ENCODE measurements at regions of chr2 and their contacts with region 1.

Region 1: GRCh38 chr2:162123806-162124758 is 28.0 kb downstream of the GCG start:
- DNase-seq: no peak
- H3K4me3 ChIP-seq: no peak overlapping the region
- H3K27ac ChIP-seq: no peak overlapping the region
- H3K4me1 ChIP-seq: no peaks in the 10 kb centered on the region
- H3K27me3 ChIP-seq: no peaks in the 10 kb centered on the region
- CTCF ChIP-seq: peak in 2 of 3 experiments; percentile 11 to 52; a peak in 2 of 4 replicates
- EP300 ChIP-seq: no peak
- POLR2A ChIP-seq: no peak
- RAD21 ChIP-seq: peak in 1 of 2 experiments; percentile 72

Region 2: GRCh38 chr2:161946489-161947107 is 177.5 kb before region 1 on chr2:
- CTCF ChIA-PET with region 1: interaction called, 27 read pairs
- POLR2A ChIA-PET with region 1: no interaction called
- DNase-seq: no peak
- H3K4me3 ChIP-seq: no peak overlapping the region
- H3K27ac ChIP-seq: no peak overlapping the region
- H3K4me1 ChIP-seq: peaks cover 0 to 4% (median 0%) of the 10 kb centered on the region in 4 experiments; a peak in 1 of 7 replicates
- H3K27me3 ChIP-seq: no peaks in the 10 kb centered on the region
- CTCF ChIP-seq: peak in 2 of 3 experiments; percentile 23 to 31; a peak in 2 of 4 replicates
- EP300 ChIP-seq: no peak
- POLR2A ChIP-seq: no peak
- RAD21 ChIP-seq: peak; percentile 62 to 67

Region 3: DNA sequence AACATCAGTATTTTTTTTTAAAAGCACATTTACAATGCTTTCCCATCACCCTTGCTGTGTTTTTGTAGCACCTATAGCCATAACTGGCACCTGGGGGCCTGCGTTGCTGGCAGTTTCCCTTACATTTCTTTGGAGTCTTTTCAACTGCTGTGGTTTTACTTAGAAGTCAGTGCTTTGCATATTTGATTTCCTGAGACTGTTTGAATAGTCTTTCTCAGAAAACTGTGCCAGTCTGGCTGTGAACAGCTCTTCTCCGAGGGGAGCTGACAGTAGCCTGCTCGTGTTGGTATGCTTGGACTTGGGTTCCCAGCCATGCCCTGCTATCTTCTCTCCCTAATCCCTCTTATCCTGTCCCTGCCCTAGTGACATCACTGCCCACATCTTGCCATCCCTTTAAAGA is 131.6 kb before region 1 on chr2:
- CTCF ChIA-PET with region 1: interaction called, 14 read pairs
- POLR2A ChIA-PET with region 1: no interaction called
- DNase-seq: no peak
- H3K4me3 ChIP-seq: no peak overlapping the region
- H3K27ac ChIP-seq: no peak overlapping the region
- H3K4me1 ChIP-seq: no peaks in the 10 kb centered on the region
- H3K27me3 ChIP-seq: no peaks in the 10 kb centered on the region
- CTCF ChIP-seq: no peak
- EP300 ChIP-seq: no peak
- POLR2A ChIP-seq: no peak
- RAD21 ChIP-seq: no peak

Region 4: DNA sequence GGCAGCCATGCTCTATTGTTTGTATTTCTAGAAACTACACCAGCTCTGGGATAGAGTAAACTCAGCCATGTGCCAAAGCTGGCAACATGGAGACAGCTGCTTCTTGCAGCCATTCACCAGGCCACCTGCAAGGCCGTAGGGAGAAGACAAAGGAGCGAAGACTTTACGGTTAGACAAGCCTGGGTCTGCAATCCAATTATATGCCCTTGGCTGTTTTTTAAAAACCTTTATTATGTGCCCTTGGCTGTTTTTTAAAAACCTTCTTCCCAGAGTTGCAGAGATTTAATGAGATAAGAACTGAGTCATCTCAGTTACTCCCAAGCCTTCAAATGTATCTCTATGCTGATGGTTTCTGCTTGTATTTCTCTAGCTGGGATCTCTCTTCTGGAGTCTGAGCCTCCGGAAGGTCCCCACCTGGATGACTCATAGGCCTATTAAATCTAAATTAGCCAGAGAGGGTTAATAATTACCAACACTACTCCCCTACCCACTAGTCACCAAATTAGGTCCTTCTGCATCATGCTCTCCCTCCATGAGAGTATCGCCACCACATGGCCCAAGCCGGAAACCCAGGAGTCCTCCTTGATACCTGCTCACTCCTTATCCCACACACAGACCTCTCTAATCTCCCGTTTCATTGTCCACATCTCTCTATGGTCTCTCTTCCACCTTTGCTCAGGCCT is 32.6 kb before region 1 on chr2:
- CTCF ChIA-PET with region 1: interaction called, 11 read pairs
- POLR2A ChIA-PET with region 1: no interaction called
- DNase-seq: peak; percentile 5 to 60
- H3K4me3 ChIP-seq: no peak overlapping the region
- H3K27ac ChIP-seq: no peak overlapping the region
- H3K4me1 ChIP-seq: no peaks in the 10 kb centered on the region
- H3K27me3 ChIP-seq: no peaks in the 10 kb centered on the region
- CTCF ChIP-seq: peak; percentile 54 to 68 (median 62)
- EP300 ChIP-seq: no peak
- POLR2A ChIP-seq: no peak
- RAD21 ChIP-seq: peak; percentile 70 to 76

Region 5: DNA sequence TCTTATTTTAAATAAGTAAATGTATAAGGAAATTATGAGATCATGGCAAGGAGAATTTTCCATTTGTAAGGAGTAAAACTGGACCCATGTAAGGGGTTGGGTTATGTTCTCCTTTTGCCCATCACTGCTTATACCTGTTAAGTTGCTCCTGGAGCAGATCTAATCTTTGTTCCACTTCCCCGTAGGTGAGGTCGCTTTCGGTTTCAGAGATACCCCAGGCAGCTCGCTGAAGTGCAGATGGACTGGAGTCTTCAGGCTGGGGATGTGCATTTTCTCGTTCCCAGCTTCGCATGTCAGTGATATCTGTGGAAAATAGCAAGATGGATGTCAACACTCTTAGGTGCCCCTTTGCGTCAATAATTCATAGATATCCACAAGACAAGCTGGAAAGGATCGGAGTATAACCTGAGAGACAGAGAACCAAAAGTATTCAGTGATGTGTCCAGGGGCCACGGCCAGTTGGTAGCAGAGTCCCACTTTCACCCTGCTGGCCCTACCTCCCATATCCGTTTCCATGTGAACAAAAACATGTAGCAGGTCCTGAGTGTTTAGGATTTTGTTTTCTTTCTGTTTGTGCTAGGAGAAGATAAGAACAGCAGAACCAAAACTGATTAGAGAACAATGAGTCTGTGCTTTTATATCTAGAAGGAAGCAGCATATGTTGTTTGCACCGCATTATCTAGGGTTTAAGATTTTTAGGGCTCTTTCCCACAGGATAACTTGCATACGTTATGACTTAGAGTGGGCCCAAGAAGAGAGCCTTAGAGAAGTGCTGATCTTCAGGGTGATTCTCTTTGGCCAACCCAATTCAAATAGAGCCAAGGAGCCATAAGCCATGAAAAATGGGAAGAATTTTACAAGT is 255.9 kb after region 1 on chr2:
- CTCF ChIA-PET with region 1: no interaction called
- POLR2A ChIA-PET with region 1: no interaction called
- DNase-seq: no peak
- H3K4me3 ChIP-seq: no peak overlapping the region
- H3K27ac ChIP-seq: no peak overlapping the region
- H3K4me1 ChIP-seq: no peaks in the 10 kb centered on the region
- H3K27me3 ChIP-seq: no peaks in the 10 kb centered on the region
- CTCF ChIP-seq: no peak
- EP300 ChIP-seq: no peak
- POLR2A ChIP-seq: no peak
- RAD21 ChIP-seq: no peak